ENCODE measurements at regions of chr14 and their contacts with region 1.

Region 1: DNA sequence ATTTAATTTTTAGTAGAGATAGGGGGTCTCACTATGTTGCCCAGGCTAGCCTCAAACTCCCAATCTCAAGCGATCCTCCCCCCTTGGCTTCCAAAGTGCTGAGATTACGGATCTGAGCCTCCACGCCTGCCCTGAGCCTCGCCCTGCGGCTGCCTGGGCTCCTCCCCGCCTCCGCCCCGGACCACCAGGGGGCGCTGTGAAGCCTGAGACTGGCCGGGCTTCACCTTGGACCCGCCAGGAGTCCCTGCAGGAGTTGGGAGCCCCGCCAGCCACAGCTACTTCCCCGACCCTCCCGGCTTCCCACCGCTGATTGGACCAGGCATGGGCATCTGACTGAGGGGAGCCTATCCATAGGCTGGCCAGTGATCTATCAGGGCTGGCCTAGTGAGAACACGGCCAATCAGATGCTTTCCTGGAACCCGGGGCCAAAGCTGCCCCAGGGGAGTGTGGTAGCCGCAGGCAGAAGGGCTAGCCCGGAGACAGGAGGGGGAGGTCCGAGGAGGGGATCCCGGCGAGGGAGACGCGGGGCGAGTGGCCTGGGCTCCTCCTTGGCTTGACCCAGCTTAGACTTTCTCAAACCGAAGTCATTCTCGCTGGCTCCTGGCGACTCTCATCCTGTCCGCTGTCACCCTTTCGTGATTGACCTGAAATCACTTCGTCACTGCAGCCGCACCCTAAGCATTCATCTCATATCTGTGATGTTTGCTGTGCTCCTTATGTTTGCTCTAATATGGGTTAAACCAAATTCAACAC is 15.1 kb upstream of the ANKRD9 start:
- DNase-seq: peak; percentile 90 to 93
- ATAC-seq: peak; percentile 85 to 94 (median 91)
- H3K4me3 ChIP-seq: peak overlapping the region; percentile 44
- H3K4me3 Mint-ChIP-seq: peak overlapping the region; percentile 95
- H3K27ac ChIP-seq: peak overlapping the region; percentile 56
- H3K27ac Mint-ChIP-seq: peak overlapping the region; percentile 84 to 95
- H3K4me1 ChIP-seq: peaks cover 25% of the 10 kb centered on the region
- H3K4me1 Mint-ChIP-seq: peaks cover 16 to 31% of the 10 kb centered on the region in 2 donors
- H3K27me3 ChIP-seq: no peaks in the 10 kb centered on the region
- H3K27me3 Mint-ChIP-seq: no peaks in the 10 kb centered on the region
- CTCF ChIP-seq: peak; percentile 99

Region 2: GRCh38 chr14:102479777-102480176 is 44.9 kb before region 1 on chr14:
- intact Hi-C with region 1: no loop called
- DNase-seq: no peak
- ATAC-seq: no peak
- H3K4me3 ChIP-seq: no peak overlapping the region
- H3K4me3 Mint-ChIP-seq: no peak overlapping the region
- H3K27ac ChIP-seq: no peak overlapping the region
- H3K27ac Mint-ChIP-seq: no peak overlapping the region
- H3K4me1 ChIP-seq: no peaks in the 10 kb centered on the region
- H3K4me1 Mint-ChIP-seq: peaks cover 0 to 7% of the 10 kb centered on the region in 2 donors
- H3K27me3 ChIP-seq: no peaks in the 10 kb centered on the region
- H3K27me3 Mint-ChIP-seq: no peaks in the 10 kb centered on the region
- CTCF ChIP-seq: no peak

Region 3: DNA sequence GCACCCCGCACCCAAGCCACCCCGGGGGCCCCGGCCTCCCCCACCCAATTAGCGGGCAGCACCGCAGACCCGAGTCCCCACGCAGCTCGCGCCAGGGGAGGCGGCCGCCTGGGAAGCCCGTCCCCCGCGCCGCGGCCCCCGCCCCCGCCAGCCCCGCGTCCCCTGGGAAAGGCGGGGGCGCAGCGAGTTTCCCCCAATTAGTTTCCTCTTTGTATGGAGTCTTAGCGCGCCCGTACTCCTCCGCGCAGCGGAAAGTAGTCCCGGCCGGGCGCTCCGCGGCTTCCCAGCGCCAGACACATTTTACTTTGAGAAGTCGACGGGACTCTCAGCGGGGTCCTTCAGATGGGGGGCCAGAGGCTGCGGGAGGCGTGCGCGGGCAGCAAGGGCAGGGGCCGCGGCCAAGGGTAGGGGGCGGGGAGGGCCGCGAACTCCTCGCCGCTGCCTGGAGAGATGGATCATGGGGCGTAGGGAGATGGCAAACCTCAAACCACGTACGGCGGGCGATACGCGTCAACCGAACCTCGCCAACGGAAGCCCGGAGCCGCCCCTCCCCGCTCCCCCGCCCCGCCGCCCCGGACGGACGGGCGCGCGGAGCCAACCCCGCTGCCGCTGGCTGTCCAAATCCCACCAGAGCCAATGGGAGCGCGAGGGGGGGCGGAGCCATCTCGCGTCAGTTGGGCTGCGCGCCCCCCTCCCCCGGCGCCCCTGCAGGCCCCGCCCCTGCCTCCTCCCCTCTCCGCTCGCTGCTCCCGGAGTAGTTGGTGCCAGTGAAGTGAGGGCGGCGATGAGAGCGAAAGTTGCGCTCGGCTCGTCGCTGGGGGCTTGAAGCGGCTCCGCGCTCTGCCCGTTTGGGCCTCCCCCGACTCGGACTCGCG is 67.5 kb after region 1 on chr14 and contains the start of gene RCOR1:
- intact Hi-C with region 1: loop called (anchors 2 kb)
- DNase-seq: peak; percentile 94 to 99
- ATAC-seq: peak; percentile 86 to 97 (median 88)
- H3K4me3 ChIP-seq: peak within 1 kb of the TSS; percentile 58
- H3K4me3 Mint-ChIP-seq: peak within 1 kb of the TSS; percentile 98
- H3K27ac ChIP-seq: peak within 1 kb of the TSS; percentile 85
- H3K27ac Mint-ChIP-seq: peak within 1 kb of the TSS; percentile 89 to 93
- H3K4me1 ChIP-seq: peaks cover 17% of the 10 kb centered on the region
- H3K4me1 Mint-ChIP-seq: peaks cover 18 to 24% of the 10 kb centered on the region in 2 donors
- H3K27me3 ChIP-seq: no peaks in the 10 kb centered on the region
- H3K27me3 Mint-ChIP-seq: no peaks in the 10 kb centered on the region
- CTCF ChIP-seq: no peak
- total RNA-seq, gene RCOR1: 20.3 to 36.5 (median 21.8) TPM